ENCODE measurements at regions of chr3 and their contacts with region 1.

Region 1: GRCh38 chr3:129052675-129053074 is 7.9 kb upstream of the GP9 start:
- DNase-seq: no peak
- H3K4me3 ChIP-seq: no peak overlapping the region
- H3K27ac ChIP-seq: no peak overlapping the region
- H3K4me1 ChIP-seq: no peaks in the 10 kb centered on the region
- H3K27me3 ChIP-seq: no peaks in the 10 kb centered on the region
- CTCF ChIP-seq: no peak
- EP300 ChIP-seq: no peak
- POLR2A ChIP-seq: no peak
- RAD21 ChIP-seq: no peak

Region 2: DNA sequence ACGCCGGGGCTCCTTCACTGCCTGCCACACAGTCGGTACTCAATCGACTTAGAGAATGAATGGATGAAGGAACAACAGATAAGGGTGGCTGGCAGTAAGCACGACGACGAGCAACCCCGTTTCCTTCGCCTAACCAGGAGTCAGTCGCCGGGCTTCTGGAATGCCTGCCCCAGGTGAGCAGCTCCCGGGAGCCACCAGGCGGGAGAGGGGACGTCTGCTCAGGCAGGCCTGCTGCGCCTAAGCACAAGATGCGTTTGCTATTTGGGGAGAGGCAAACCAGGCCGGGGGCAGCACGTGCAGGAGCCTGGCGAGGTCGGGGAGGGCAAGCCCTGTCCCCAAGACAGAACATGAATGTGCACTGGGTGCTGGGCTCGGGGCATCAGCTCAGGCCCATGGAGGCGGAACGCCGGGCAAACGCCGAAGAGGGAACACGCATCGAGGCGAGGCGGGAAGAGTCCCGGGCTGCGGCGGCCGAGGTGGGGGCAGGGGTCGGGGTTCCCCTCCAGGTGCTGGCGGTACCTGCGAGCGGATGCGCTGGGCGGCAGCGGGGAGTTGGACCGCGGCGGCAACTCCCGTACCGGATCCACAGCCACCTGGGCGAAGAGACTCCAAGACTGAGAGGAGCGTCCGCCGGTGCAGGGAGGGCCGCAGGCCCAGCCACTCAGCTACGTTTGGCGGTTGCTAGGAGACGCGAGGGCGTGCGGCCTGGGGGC is 59.1 kb before region 1 on chr3 and contains the start of gene CFAP92:
- CTCF ChIA-PET with region 1: interaction called, 20 read pairs
- POLR2A ChIA-PET with region 1: interaction called, 3 read pairs
- DNase-seq: peak; percentile 41 to 96
- H3K4me3 ChIP-seq: peak within 1 kb of the TSS; percentile 42 to 62 (median 51)
- H3K27ac ChIP-seq: no peak within 1 kb of the TSS
- H3K4me1 ChIP-seq: peaks cover 2 to 14% (median 8%) of the 10 kb centered on the region in 4 experiments
- H3K27me3 ChIP-seq: peaks cover 0 to 19% (median 17%) of the 10 kb centered on the region in 4 experiments; a peak in 6 of 7 replicates
- CTCF ChIP-seq: peak in 1 of 3 experiments; percentile 11; a peak in 1 of 4 replicates
- EP300 ChIP-seq: no peak
- POLR2A ChIP-seq: no peak
- RAD21 ChIP-seq: no peak; a peak in 1 of 4 replicates
- total RNA-seq, gene CFAP92: 2.0 and 2.4 TPM in 2 replicates

Region 3: DNA sequence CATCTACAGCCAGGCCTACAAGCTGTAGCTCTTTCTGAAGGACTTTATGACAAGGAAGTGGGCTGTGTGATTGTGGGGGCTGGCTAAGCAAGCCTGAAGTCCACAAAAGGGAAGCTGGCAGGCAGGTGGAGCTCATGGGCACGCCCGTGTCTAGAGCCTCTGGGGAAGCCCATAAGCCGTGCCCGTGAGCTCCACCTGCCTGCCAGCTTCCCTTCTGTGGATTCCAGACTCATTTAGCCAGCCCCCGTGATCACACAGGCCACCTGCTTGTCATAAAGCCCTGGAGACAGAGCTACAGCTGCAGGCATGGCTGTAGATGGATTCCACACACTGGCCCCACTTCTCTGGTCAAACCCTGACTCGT is 36.3 kb before region 1 on chr3:
- CTCF ChIA-PET with region 1: interaction called, 23 read pairs
- POLR2A ChIA-PET with region 1: no interaction called
- DNase-seq: no peak
- H3K4me3 ChIP-seq: no peak overlapping the region
- H3K27ac ChIP-seq: no peak overlapping the region
- H3K4me1 ChIP-seq: peaks cover 0 to 7% (median 1%) of the 10 kb centered on the region in 4 experiments; a peak in 2 of 7 replicates
- H3K27me3 ChIP-seq: peaks cover 0 to 4% (median 0%) of the 10 kb centered on the region in 4 experiments; a peak in 1 of 7 replicates
- CTCF ChIP-seq: no peak
- EP300 ChIP-seq: no peak
- POLR2A ChIP-seq: no peak
- RAD21 ChIP-seq: no peak; a peak in 1 of 4 replicates

Region 4: DNA sequence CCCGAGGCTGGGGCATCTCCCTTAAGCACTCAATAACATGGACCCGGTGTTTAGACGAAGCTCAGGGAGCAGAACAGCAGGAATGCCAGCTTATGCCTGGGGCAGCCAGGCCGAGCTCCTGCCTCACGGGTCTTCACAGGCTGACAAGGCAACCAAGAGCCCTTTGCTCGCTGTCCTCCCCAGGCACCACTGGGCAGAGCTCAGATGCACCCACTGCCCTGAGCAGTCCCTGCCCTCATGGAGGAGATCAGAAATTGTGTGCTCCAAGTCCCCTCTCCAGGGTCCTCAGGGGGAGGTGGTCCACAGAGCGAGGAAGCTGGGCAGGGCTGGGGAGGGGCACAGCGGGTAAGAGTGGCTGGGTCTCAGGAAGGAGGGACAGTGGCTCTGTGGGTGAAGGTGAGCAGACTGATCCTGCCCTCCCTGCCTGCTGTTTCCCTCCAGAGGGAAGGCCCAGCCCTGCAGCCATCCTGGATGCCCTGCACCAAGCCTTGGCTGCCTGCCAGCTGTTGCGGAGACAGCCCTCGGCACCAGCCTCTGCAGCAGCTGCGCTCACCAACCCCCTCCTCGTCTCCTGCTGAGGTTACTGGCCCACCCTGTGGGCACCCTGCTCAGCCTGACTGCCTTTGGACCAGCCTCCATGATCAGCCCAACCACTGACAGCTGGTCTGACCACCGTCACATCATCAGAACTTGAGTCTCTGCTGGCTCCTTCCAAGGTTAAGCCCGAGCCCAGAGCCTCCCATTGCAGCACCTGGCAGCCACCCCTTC is 13.2 kb before region 1 on chr3:
- CTCF ChIA-PET with region 1: interaction called, 84 read pairs
- POLR2A ChIA-PET with region 1: no interaction called
- DNase-seq: no peak
- H3K4me3 ChIP-seq: no peak overlapping the region
- H3K27ac ChIP-seq: no peak overlapping the region
- H3K4me1 ChIP-seq: peaks cover 2 to 15% (median 5%) of the 10 kb centered on the region in 4 experiments; a peak in 6 of 7 replicates
- H3K27me3 ChIP-seq: no peaks in the 10 kb centered on the region; a peak in 1 of 7 replicates
- CTCF ChIP-seq: no peak
- EP300 ChIP-seq: no peak
- POLR2A ChIP-seq: no peak
- RAD21 ChIP-seq: no peak

Region 5: DNA sequence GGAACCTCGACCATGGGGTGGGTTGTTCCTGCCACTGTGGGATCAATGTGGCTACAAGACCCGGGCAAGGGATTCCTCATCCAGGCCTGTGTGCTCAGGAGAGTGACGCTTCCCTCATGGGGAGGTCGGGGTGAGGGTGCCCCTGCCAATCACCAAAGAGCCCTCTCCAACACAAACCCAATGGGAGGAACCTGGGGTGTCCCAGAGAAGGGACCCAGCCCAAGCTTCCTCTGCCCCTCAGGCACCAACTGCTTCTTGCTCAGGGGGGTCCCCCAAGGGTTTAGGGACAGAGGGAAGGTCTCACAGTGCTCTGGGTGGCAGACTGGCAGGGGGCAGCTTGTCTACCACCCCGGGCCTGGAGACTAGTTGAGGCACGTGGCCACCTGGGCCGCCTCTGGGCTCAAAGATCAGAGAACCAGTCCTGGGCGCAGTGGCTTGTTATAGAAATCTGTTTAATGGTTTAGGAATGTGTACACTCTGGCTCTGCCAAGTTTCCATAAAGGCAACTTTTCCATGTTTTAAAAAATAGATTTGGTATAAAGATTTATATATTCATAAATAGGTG is 34.5 kb after region 1 on chr3:
- CTCF ChIA-PET with region 1: interaction called, 38 read pairs
- POLR2A ChIA-PET with region 1: interaction called, 3 read pairs
- DNase-seq: no peak
- H3K4me3 ChIP-seq: no peak overlapping the region
- H3K27ac ChIP-seq: no peak overlapping the region
- H3K4me1 ChIP-seq: no peaks in the 10 kb centered on the region
- H3K27me3 ChIP-seq: 0 out of 7 replicates have a peak, but pooled peaks cover 0 to 3% (median 0%) of the 10 kb centered on the region in 4 experiments
- CTCF ChIP-seq: no peak
- EP300 ChIP-seq: no peak
- POLR2A ChIP-seq: no peak
- RAD21 ChIP-seq: no peak

Region 6: DNA sequence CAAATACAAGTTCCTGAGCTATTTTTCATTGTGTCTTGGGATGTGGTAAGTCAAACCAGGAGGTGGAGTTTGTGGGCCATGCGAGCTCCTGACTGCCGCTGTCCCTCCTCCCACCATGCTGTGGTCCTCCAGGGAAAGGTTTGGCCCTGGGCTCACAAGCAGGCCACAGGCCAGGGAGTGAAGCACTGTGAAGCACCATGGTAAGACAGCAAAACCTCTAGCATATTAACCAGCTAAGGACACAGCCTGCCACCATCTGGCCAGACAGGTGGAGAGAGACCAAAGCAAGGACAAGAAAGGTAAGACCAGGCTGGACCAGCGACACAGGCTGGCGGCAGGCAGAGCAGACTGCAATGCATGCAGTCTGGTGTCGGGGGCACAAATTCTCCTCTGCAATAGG is 53.7 kb after region 1 on chr3:
- CTCF ChIA-PET with region 1: interaction called, 19 read pairs
- POLR2A ChIA-PET with region 1: no interaction called
- DNase-seq: no peak
- H3K4me3 ChIP-seq: no peak overlapping the region
- H3K27ac ChIP-seq: no peak overlapping the region
- H3K4me1 ChIP-seq: no peaks in the 10 kb centered on the region
- H3K27me3 ChIP-seq: no peaks in the 10 kb centered on the region
- CTCF ChIP-seq: peak in 1 of 3 experiments; percentile 30; a peak in 1 of 4 replicates
- EP300 ChIP-seq: no peak
- POLR2A ChIP-seq: no peak
- RAD21 ChIP-seq: peak; percentile 25 to 44; a peak in 3 of 4 replicates

Region 7: DNA sequence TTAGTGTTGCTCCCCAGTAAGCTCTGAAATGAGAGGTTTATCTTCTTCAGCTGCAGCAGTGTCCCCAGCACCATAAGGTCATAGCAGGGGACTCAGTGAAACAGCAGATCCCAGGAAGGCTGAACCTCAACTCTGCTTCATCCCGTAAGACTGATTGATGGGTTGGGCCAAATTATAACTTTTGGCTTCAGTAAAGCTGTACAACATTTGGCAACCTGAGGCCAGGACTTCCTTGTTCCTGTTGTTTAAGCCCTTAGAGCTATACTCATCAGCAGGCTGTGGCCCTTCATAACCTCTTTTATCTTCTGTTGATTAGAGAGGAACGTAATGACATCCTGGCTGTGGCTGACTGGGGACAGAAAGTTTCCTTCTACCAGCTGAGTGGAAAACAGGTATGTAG is 416.4 kb after region 1 on chr3:
- CTCF ChIA-PET with region 1: no interaction called
- POLR2A ChIA-PET with region 1: no interaction called
- DNase-seq: no peak
- H3K4me3 ChIP-seq: no peak overlapping the region
- H3K27ac ChIP-seq: no peak overlapping the region
- H3K4me1 ChIP-seq: no peaks in the 10 kb centered on the region
- H3K27me3 ChIP-seq: no peaks in the 10 kb centered on the region
- CTCF ChIP-seq: no peak
- EP300 ChIP-seq: no peak
- POLR2A ChIP-seq: no peak
- RAD21 ChIP-seq: no peak

Region 8: DNA sequence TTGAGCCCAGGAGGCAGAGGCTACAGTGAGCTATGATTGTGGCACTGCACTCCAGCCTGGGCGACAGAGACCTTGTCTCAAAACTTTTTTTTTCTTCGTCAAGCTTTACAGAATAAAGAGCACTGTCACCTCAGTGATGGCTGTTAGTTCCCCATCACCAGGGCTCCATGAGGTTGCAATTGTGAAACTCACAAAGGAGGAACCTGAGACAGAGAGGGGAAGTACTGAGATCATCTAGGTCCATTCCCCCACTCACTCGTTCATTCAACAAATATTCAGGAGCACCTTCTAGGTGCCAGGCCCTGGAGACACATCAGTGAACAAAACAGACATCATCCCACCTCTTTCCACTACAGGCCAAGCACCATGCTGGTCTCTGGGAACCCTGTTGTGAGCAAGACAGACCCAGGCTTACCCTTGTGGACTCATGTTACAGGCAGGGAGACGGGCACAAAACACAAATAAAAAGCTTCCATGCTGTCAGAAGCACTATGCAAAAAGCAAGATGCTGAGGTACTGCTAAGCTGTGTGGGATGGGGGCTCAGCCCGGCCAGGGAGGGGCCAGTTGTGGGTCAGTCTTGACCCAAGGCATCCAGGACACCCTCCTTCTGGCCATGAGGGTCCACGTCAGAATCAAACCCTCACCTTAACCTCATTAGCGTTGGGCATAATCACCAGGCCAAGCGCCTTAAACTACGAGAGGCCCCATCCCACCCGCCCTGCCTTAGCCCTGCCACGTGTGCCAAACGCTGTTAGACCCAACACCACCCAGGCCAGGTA is 473.6 kb after region 1 on chr3:
- CTCF ChIA-PET with region 1: no interaction called
- POLR2A ChIA-PET with region 1: no interaction called
- DNase-seq: peak in 1 of 2 experiments; percentile 47
- H3K4me3 ChIP-seq: no peak overlapping the region
- H3K27ac ChIP-seq: no peak overlapping the region
- H3K4me1 ChIP-seq: peaks cover 3 to 21% (median 9%) of the 10 kb centered on the region in 4 experiments
- H3K27me3 ChIP-seq: no peaks in the 10 kb centered on the region
- CTCF ChIP-seq: no peak
- EP300 ChIP-seq: no peak
- POLR2A ChIP-seq: no peak
- RAD21 ChIP-seq: no peak

Measured in H1 (cell line).